Dorsolateral prefrontal cortex (tissue), 120 donors: ENCODE measurements at regions of chr1 and their contacts with region 1.

Region 1: GRCh38 chr1:225977937-225978748 is 21.0 kb downstream of the SDE2 start:
- DNase-seq: no peak
- H3K4me3 ChIP-seq: no peak overlapping the region
- H3K27ac ChIP-seq: no peak overlapping the region
- H3K27me3 ChIP-seq: no peaks in the 10 kb centered on the region
- CTCF ChIP-seq: no peak

Region 2: DNA sequence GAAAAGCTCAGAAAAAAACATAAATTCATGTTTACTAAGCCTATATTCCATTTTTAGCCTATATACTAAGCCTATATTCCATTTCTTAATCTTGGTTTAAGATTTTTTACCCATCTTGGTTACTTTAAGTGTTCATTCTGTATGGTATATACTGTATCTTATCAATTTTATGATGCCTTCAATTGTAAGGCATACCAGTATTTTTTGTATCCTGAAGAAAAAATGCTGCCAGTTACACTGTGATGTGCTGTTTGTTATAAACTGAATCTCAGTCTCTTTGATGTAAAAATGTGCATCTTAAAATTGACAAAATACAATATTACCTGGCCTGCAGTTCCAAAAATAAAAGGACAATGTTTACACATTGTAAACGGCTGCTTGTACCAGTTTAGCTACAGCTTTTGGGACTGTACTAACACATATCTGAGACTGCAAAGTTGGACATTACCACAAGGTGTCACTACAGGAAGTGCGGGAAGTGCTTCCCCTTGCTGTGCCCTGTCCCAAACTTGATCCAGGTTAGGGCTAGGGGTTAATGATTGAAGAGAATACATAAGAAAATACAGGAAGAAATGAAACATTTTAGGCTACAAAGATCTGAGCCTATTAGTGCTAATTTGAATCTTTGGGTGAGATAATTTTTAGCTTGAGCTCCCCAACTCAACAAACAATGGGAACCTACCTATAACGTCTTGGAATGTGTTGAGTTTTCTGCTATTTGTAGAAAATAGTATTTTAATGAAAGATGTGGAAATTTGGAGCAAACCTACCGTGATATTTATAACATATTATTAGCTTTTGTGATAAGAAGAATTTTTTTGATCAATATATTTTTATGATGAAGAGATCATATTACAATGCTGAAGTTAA is 659.2 kb before region 1 on chr1:
- intact Hi-C with region 1: loop called in 1 of 2 experiments (anchors 5 kb)
- DNase-seq: peak in 1 of 10 donors; percentile 4
- H3K4me3 ChIP-seq: no peak overlapping the region
- H3K27ac ChIP-seq: no peak overlapping the region
- H3K27me3 ChIP-seq: peaks cover 0 to 4% (median 0%) of the 10 kb centered on the region in 45 donors
- CTCF ChIP-seq: peak; percentile 17 to 76 (median 58)

Region 3: DNA sequence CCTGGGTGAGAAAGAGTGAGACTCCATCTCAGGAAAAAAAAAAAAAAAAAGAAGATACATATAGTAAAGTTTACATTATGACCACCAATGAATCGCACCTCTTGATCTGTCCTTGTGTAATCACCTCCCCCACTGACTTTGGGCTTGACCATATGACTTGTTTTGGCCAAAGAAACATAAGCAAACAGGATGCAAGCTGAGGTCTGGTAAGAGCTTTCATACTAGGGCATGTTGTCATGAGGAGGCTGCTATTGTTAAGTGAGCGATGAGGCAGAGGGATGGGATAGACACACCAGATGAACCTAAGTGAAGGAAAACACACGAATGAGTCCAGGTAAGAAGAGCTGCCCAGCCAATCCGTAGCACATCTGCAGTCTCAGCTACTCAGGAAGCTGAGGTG is 336.0 kb before region 1 on chr1:
- intact Hi-C with region 1: no loop called
- DNase-seq: no peak
- H3K4me3 ChIP-seq: no peak overlapping the region
- H3K27ac ChIP-seq: no peak overlapping the region
- H3K27me3 ChIP-seq: no peaks in the 10 kb centered on the region
- CTCF ChIP-seq: no peak

Region 4: GRCh38 chr1:225660544-225660946 is 317.6 kb before region 1 on chr1:
- intact Hi-C with region 1: loop called (anchors 5 to 10 kb)
- DNase-seq: no peak
- H3K4me3 ChIP-seq: no peak overlapping the region
- H3K27ac ChIP-seq: peak overlapping the region in 1 of 59 donors; percentile 2
- H3K27me3 ChIP-seq: no peaks in the 10 kb centered on the region
- CTCF ChIP-seq: no peak

Region 5: DNA sequence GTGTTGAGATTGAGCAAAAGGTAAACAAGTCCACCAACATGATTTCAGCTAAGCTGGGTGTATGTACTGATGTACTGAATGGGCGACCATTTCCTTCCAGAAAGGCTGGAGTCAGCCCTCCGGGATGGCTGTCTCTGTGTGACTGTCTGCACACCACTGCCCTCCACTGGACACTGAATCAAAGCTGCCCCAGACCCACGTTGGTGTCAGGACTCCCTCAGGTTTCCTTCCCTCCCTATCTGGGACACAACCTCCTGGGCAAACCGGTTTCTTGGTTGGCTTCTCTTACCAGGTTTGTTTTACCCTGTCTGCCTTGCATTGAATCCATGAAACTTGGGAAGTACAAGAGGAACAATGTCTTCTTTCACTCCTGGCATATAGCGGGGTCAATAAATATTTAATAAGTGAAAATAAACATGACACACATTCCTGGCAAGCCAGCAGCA is 205.8 kb before region 1 on chr1:
- intact Hi-C with region 1: loop called (anchors 2 to 5 kb)
- DNase-seq: peak; percentile 48 to 86 (median 84)
- H3K4me3 ChIP-seq: peak overlapping the region in 5 of 59 donors; percentile 1 to 24 (median 6)
- H3K27ac ChIP-seq: peak overlapping the region in 48 of 59 donors; percentile 3 to 87 (median 60)
- H3K27me3 ChIP-seq: no peaks in the 10 kb centered on the region
- CTCF ChIP-seq: peak; percentile 54 to 96 (median 85)

Region 6: GRCh38 chr1:225923692-225924555 is 54.2 kb before region 1 on chr1 and contains the start of gene PYCR2:
- intact Hi-C with region 1: loop called (anchors 5 to 10 kb)
- DNase-seq: peak; percentile 89 to 98 (median 94)
- H3K4me3 ChIP-seq: peak within 1 kb of the TSS; percentile 66 to 100 (median 94)
- H3K27ac ChIP-seq: peak within 1 kb of the TSS; percentile 35 to 98 (median 91)
- H3K27me3 ChIP-seq: no peaks in the 10 kb centered on the region
- CTCF ChIP-seq: peak in 32 of 56 donors; percentile 4 to 61 (median 30)
- total RNA-seq, gene PYCR2: 44.8 to 116 (median 65.6) TPM

Region 7: GRCh38 chr1:226109829-226110248 is 131.7 kb after region 1 on chr1:
- intact Hi-C with region 1: no loop called
- DNase-seq: peak; percentile 76 to 93 (median 92)
- H3K4me3 ChIP-seq: peak overlapping the region; percentile 59 to 93 (median 73)
- H3K27ac ChIP-seq: peak overlapping the region; percentile 84 to 99 (median 98)
- H3K27me3 ChIP-seq: no peaks in the 10 kb centered on the region
- CTCF ChIP-seq: peak in 22 of 56 donors; percentile 7 to 48 (median 27)